Ovary (tissue), 10 donors: ENCODE measurements at regions of chr15 and their contacts with region 1.

Region 1: DNA sequence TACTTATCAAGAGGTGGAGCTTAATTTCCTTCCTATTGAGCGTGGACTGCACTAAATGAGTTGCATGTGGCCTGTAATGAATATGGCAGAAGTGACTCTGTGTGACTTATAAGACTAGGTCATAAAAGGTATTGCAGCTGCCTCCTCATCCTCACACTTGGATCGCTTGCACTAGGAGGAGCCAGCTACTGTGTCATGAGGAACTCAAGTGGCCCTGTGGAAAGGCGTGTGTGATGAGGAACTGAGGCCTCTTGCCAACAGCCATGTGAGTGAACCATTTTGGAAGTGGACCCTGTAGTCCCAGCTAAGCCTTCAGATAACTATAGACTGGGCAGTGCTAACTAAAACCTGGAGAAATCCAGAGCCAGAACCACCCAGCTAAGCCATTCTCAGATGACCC is 7.1 kb upstream of the SLC30A4 start:
- DNase-seq: no peak
- H3K4me3 ChIP-seq: no peak overlapping the region
- H3K27ac ChIP-seq: no peak overlapping the region
- H3K4me1 ChIP-seq: no peaks in the 10 kb centered on the region
- H3K27me3 ChIP-seq: no peaks in the 10 kb centered on the region
- CTCF ChIP-seq: no peak
- EP300 ChIP-seq: no peak
- POLR2A ChIP-seq: no peak

Region 2: DNA sequence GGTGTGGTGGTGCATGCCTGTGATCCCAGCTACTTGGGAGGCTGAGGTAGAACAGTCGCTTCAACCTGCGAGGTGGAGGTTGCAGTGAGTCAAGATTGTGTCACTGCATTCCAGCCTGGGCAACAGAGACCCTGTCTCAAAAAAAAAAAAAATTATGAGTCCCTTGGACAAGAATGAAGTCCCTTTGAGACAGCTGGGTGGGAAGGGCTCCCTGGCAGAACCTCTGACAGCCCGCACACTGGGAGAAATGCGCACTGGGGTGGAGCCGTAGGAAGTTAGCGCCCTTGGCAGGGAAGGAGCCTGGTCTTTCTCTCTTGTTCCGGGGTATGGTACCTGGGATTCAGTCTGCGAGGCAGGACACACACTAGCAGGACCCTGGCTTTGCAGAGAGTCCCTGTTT is 58.5 kb before region 1 on chr15:
- intact Hi-C with region 1: no loop called
- DNase-seq: no peak
- H3K4me3 ChIP-seq: no peak overlapping the region
- H3K27ac ChIP-seq: no peak overlapping the region
- H3K4me1 ChIP-seq: no peaks in the 10 kb centered on the region
- H3K27me3 ChIP-seq: no peaks in the 10 kb centered on the region
- CTCF ChIP-seq: no peak
- EP300 ChIP-seq: no peak
- POLR2A ChIP-seq: no peak

Region 3: DNA sequence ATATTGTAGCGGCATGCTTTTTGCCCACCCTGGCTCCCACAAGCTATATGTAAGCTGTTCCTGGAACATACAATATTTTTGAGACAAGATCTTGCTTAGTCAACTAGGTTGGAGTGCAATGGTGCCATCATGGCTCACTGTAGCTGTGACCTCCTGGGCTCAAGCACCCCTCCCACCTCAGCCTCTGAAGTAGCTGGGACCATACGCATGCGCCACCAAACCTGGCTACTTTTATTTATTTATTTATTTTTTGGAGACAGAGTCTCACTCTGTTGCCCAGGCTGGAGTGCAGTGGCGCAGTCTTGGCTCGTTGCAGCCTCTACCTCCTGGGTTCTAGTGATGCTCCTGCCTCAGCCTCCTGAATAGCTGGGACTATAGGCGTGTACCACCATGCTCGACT is 98.5 kb after region 1 on chr15:
- intact Hi-C with region 1: loop called in 1 of 4 experiments (anchors 5 kb)
- DNase-seq: no peak
- H3K4me3 ChIP-seq: no peak overlapping the region
- H3K27ac ChIP-seq: no peak overlapping the region
- H3K4me1 ChIP-seq: no peaks in the 10 kb centered on the region
- H3K27me3 ChIP-seq: no peaks in the 10 kb centered on the region
- CTCF ChIP-seq: no peak
- EP300 ChIP-seq: no peak
- POLR2A ChIP-seq: no peak